ENCODE measurements at regions of chr18 and their contacts with region 1.

Region 1: DNA sequence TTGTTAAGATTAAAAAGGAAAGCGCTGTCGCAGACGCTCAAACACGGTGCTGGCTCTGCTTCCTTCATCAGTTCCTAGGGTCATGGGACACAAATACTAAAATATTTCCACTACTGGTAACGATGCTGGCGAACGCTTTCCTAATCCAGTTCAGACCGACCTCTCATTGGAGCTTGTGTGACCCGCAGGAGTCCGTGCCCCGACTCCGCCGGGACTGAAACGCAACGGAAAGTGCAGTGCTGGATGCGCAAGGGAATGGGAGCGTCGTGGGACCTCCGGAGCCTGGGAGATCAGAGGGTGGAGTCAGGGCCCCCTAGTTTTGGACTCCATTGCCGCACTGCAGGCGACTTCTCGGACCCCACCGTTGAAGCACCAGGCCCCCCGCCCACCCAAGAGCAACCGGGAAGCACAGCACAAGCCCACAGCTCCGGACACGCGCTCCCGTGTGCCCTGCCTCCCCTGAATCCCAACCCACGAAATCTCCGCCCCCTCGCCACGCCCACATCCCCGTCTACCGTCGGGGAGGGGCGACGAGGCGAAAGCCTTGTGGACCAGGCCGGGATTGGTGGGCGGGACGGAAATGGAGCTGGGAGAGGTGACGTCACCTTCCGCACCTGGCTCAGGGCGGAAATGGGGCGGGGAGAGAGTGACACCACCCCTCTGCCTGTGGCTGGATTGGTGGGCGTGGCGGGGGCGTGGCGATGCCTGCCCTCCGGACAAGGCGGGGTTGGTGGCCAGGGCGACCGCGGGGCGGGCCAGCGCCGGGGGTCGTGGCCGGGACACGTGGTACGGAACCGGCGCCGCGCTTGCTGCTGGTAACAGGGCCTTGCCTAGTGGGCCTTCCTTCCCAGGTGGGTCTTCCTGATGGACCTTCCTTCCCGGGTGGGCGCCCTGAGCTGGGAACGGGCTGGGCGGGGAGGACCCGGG is at the start of gene CNDP2:
- DNase-seq: peak; percentile 100
- ATAC-seq: peak; percentile 96
- total RNA-seq, gene CNDP2: 54.5 TPM

Region 2: GRCh38 chr18:74196220-74197119 is 299.4 kb before region 1 on chr18:
- intact Hi-C with region 1: loop called (anchors 10 kb)
- DNase-seq: no peak
- ATAC-seq: peak; percentile 86

Region 3: DNA sequence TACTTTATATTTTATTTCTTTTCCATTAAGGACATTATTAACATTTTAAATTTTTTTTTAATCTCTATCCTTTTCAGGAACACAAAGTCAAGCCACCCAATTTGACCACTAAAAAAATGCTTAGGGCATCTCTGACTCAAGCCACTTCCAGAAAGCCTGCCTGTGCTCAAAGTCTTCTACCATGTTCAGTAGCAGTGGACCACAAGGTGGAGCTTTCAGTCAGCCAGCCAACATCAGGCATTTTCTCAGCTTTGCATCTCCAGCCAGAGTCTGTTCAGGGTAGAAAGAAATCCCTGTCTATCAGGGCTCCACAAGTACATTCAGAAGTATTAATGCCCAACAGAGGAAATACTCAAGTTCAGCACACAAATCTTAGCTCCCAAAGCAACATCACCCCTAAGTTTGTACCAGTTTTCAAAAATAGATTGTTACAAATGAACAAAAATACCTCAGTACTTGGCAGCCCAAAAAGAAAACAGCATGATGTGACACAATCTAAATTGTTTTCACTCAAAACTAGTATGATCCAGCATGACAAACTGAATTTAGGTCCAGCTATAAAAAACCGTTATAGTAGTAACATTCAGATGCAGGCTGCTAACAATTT is 142.6 kb before region 1 on chr18:
- intact Hi-C with region 1: loop called (anchors 5 kb)
- DNase-seq: peak; percentile 43
- ATAC-seq: peak; percentile 96

Region 4: DNA sequence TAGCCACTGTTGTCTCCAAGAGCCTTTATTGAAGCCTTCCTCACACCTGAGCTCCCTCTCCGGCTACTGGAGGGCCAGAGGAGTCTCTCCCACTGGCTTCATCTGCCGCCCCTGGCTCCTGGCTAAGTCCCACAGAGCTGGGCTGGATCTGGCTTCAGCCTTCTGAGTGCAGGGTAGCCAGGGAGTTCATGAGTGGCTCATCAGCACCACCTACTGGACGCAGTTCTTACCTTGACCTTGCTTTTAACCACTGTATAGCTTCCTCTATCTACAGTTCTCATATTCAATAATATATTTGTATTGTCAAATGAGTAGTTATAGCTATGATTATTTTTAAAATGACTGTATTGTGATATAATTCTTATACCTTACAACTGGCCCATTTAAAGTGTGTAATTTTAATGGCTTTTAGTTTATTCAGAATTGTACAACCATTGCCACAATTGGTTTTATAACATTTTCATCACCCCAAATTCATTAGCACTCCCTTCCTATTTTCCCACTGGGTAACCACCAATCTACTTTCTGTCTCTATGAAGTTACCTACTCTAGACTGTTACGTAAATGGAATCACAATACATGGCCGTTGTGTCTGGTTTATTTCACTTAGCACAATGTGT is 56.2 kb after region 1 on chr18:
- intact Hi-C with region 1: loop called (anchors 5 kb)
- DNase-seq: peak; percentile 79
- ATAC-seq: peak; percentile 98